PC-9 (cell line): ENCODE measurements at regions of chr3 and their contacts with region 1.

Region 1: DNA sequence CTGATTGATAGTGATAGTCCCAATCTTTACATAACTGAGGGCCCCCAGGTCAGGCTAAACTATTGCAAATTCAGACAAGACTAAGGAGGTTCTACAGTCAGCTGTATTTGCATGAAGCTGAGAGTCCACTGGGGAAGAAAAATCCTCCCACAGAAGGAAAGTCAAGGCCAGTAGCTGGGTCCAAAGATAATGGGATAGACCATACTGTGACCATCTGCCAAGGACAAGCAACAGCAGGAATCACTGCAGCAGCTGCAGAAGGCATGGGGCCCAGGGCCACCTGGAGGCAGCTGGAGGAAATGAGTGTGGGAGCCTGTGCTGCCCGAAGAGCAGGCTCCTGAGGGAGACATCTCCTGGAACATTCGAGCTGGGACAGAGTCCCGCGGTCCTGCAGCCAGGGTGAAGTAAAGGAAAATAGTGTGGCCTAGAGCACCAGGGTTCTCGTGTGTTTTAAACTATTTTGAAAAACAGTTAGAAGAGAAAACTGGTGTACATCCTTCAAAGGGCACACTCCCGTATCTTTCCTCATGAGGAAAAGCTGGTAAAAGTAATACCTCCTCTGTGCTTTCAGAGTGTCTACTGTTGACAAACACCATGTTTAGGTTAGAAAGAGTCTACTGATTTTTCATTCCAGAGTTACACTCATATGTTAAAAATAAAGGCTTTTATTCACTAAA is 13.2 kb upstream of the TMEM212 start:
- DNase-seq: peak; percentile 54 to 77
- H3K4me3 ChIP-seq: no peak overlapping the region
- H3K27ac ChIP-seq: no peak overlapping the region
- H3K4me1 ChIP-seq: peaks cover 26% of the 10 kb centered on the region
- H3K27me3 ChIP-seq: no peaks in the 10 kb centered on the region
- CTCF ChIP-seq: peak; percentile 77

Region 2: GRCh38 chr3:171049861-171050444 is 780.0 kb before region 1 on chr3:
- CTCF ChIA-PET with region 1: no interaction called
- POLR2A ChIA-PET with region 1: no interaction called
- intact Hi-C with region 1: loop called (anchors 1 kb)
- DNase-seq: peak; percentile 53 to 64
- H3K4me3 ChIP-seq: no peak overlapping the region
- H3K27ac ChIP-seq: no peak overlapping the region
- H3K4me1 ChIP-seq: peaks cover 24% of the 10 kb centered on the region
- H3K27me3 ChIP-seq: no peaks in the 10 kb centered on the region
- CTCF ChIP-seq: peak; percentile 86

Region 3: GRCh38 chr3:171566803-171567422 is 263.1 kb before region 1 on chr3:
- CTCF ChIA-PET with region 1: interaction called, 8 read pairs
- POLR2A ChIA-PET with region 1: no interaction called
- intact Hi-C with region 1: loop called (anchors 5 kb)
- DNase-seq: peak in 1 of 2 experiments; percentile 45
- H3K4me3 ChIP-seq: no peak overlapping the region
- H3K27ac ChIP-seq: no peak overlapping the region
- H3K4me1 ChIP-seq: peaks cover 30% of the 10 kb centered on the region
- H3K27me3 ChIP-seq: no peaks in the 10 kb centered on the region
- CTCF ChIP-seq: peak; percentile 96

Region 4: DNA sequence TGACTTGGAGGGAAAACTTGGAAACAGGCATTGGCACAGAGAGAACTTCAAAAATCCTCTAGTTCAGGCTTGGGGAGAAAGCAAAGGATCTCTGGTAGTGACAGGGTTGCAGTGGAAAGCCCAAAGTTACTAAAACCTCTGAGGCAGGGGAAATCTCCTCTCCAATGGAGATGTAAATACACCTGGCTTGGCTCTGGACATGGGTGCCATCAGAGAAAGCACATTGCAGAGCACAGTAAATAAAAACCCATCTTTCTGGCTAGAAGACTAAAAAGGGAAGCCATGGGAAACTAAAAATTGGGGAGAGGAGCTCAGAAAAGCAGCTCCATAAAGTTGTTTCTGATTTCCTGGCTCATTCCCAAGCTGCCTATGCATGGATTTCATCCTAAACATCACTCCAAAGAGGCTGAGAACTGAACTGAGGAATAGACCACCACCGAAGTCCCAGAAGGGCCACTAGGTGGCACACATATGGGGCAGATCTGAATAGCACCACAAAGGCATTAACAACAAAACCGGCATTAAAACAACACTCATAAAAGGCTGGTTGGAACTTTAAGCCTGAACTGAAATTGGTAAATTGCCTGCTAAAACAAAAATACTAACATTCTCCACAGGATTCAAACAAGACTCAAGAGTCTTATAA is 126.1 kb before region 1 on chr3:
- CTCF ChIA-PET with region 1: no interaction called
- POLR2A ChIA-PET with region 1: no interaction called
- intact Hi-C with region 1: loop called (anchors 1 kb)
- DNase-seq: peak in 1 of 2 experiments; percentile 29
- H3K4me3 ChIP-seq: no peak overlapping the region
- H3K27ac ChIP-seq: no peak overlapping the region
- H3K4me1 ChIP-seq: no peaks in the 10 kb centered on the region
- H3K27me3 ChIP-seq: no peaks in the 10 kb centered on the region
- CTCF ChIP-seq: peak; percentile 82

Region 5: GRCh38 chr3:172341482-172342059 is 511.6 kb after region 1 on chr3:
- CTCF ChIA-PET with region 1: interaction called, 4 read pairs
- POLR2A ChIA-PET with region 1: no interaction called
- intact Hi-C with region 1: loop called (anchors 5 kb)
- DNase-seq: peak; percentile 24 to 77
- H3K4me3 ChIP-seq: no peak overlapping the region
- H3K27ac ChIP-seq: no peak overlapping the region
- H3K4me1 ChIP-seq: peaks cover 6% of the 10 kb centered on the region; the same call in 1 of the 2 replicates
- H3K27me3 ChIP-seq: no peaks in the 10 kb centered on the region
- CTCF ChIP-seq: peak; percentile 89

Region 6: GRCh38 chr3:173639098-173639497 is 1809.1 kb after region 1 on chr3:
- CTCF ChIA-PET with region 1: no interaction called
- POLR2A ChIA-PET with region 1: no interaction called
- intact Hi-C with region 1: no loop called
- DNase-seq: no peak
- H3K4me3 ChIP-seq: no peak overlapping the region
- H3K27ac ChIP-seq: no peak overlapping the region
- H3K4me1 ChIP-seq: no peaks in the 10 kb centered on the region
- H3K27me3 ChIP-seq: no peaks in the 10 kb centered on the region
- CTCF ChIP-seq: no peak